Right ventricle myocardium inferior (tissue), 1 donor: ENCODE measurements at regions of chr7 and their contacts with region 1.

Region 1: GRCh38 chr7:74094224-74095101 is 10.9 kb downstream of the LIMK1 start:
- DNase-seq: peak; percentile 88
- ATAC-seq: peak; percentile 65

Region 2: DNA sequence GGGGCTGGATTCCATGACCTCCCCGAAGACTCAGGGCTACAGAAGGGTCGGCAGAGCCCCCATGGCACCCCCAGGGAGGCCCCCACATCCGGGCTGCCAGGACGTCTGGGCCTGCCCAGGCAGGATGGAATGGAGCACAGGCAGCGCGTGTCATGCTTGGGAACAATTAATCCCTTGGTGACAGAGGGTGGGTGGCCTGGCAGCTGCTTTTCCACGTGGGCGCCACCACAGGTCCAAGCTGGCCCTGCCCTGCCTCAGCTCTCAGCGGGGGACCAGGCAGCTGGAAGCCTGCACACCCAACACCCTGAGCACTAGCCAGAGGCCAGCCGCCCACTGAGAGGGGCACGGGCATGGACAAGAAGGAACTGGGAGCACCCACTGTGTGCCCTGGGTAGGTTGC is 55.1 kb before region 1 on chr7:
- intact Hi-C with region 1: loop called (anchors 5 kb)
- DNase-seq: peak; percentile 47
- ATAC-seq: no peak

Region 3: GRCh38 chr7:74173866-74174605 is 79.6 kb after region 1 on chr7 and contains the start of gene EIF4H:
- intact Hi-C with region 1: loop called (anchors 5 kb)
- DNase-seq: peak; percentile 98
- ATAC-seq: peak; percentile 98
- total RNA-seq, gene EIF4H: 172 TPM